Activated T-helper 1 cell treated with anti-CD3 and anti-CD28 coated beads, Interleukin-12 subunit alpha, Interleukin-12 subunit beta, Interleukin-2, Interleukin-4 antibody, amounts not matched to agents 30 ng/mL and 10 ng/mL and 1 ng/mL, durations not matched to agents 14 hours and 24 hours and 36 hours (primary cell): ENCODE measurements at regions of chr3 and their contacts with region 1.

Region 1: GRCh38 chr3:44529927-44530326 is 25.1 kb upstream of the ZKSCAN7 start:
- DNase-seq: no peak
- H3K4me3 Mint-ChIP-seq: no peak overlapping the region
- H3K27ac Mint-ChIP-seq: no peak overlapping the region
- H3K4me1 Mint-ChIP-seq: peaks cover 4% of the 10 kb centered on the region
- H3K27me3 Mint-ChIP-seq: peaks cover 10% of the 10 kb centered on the region

Region 2: GRCh38 chr3:44510000-44510368 is 19.9 kb before region 1 on chr3:
- intact Hi-C with region 1: loop called (anchors 2 kb)
- DNase-seq: no peak
- H3K4me3 Mint-ChIP-seq: peak overlapping the region; percentile 90
- H3K27ac Mint-ChIP-seq: peak overlapping the region; percentile 75
- H3K4me1 Mint-ChIP-seq: peaks cover 38% of the 10 kb centered on the region
- H3K27me3 Mint-ChIP-seq: no peaks in the 10 kb centered on the region

Region 3: GRCh38 chr3:44624749-44625480 is 95.0 kb after region 1 on chr3 and contains the start of gene ZNF197:
- intact Hi-C with region 1: loop called (anchors 1 kb)
- DNase-seq: peak; percentile 54
- H3K4me3 Mint-ChIP-seq: peak within 1 kb of the TSS; percentile 90
- H3K27ac Mint-ChIP-seq: peak within 1 kb of the TSS; percentile 80
- H3K4me1 Mint-ChIP-seq: peaks cover 25% of the 10 kb centered on the region
- H3K27me3 Mint-ChIP-seq: no peaks in the 10 kb centered on the region
- total RNA-seq, gene ZNF197: 11.6 and 12.0 TPM in 2 replicates

Region 4: GRCh38 chr3:44913868-44914468 is 384.0 kb after region 1 on chr3:
- intact Hi-C with region 1: loop called (anchors 1 kb)
- DNase-seq: peak; percentile 27
- H3K4me3 Mint-ChIP-seq: no peak overlapping the region
- H3K27ac Mint-ChIP-seq: no peak overlapping the region
- H3K4me1 Mint-ChIP-seq: no peaks in the 10 kb centered on the region
- H3K27me3 Mint-ChIP-seq: peaks cover 3% of the 10 kb centered on the region